IMR-90 (cell line): ENCODE measurements at regions of chrX and their contacts with region 1.

Region 1: GRCh38 chrX:120769576-120770341 is 105.9 kb downstream of the CT47B1 start:
- DNase-seq: peak; percentile 19
- ATAC-seq: no peak
- H3K4me3 ChIP-seq: no peak overlapping the region
- H3K27ac ChIP-seq: no peak overlapping the region
- H3K4me1 ChIP-seq: no peaks in the 10 kb centered on the region
- H3K27me3 ChIP-seq: no peaks in the 10 kb centered on the region
- CTCF ChIP-seq: peak; percentile 31
- POLR2A ChIP-seq: no peak
- RAD21 ChIP-seq: peak; percentile 37

Region 2: GRCh38 chrX:120029354-120029753 is 740.4 kb before region 1 on chrX:
- CTCF ChIA-PET with region 1: no interaction called
- POLR2A ChIA-PET with region 1: no interaction called
- dilution Hi-C with region 1: no loop called
- in situ Hi-C with region 1: no loop called
- intact Hi-C with region 1: no loop called
- DNase-seq: no peak
- ATAC-seq: no peak
- H3K4me3 ChIP-seq: no peak overlapping the region
- H3K27ac ChIP-seq: no peak overlapping the region
- H3K4me1 ChIP-seq: no peaks in the 10 kb centered on the region
- H3K27me3 ChIP-seq: no peaks in the 10 kb centered on the region; the same call in 1 of the 2 replicates
- CTCF ChIP-seq: no peak
- POLR2A ChIP-seq: no peak
- RAD21 ChIP-seq: no peak

Region 3: GRCh38 chrX:120514236-120514635 is 255.5 kb before region 1 on chrX:
- CTCF ChIA-PET with region 1: no interaction called
- POLR2A ChIA-PET with region 1: no interaction called
- dilution Hi-C with region 1: no loop called
- in situ Hi-C with region 1: loop called (anchors 25 kb)
- intact Hi-C with region 1: no loop called
- DNase-seq: peak; percentile 25
- ATAC-seq: peak; percentile 51; the same call in 1 of the 2 replicates
- H3K4me3 ChIP-seq: no peak overlapping the region
- H3K27ac ChIP-seq: no peak overlapping the region
- H3K4me1 ChIP-seq: 0 out of 2 replicates have a peak, but pooled peaks cover 2% of the 10 kb centered on the region
- H3K27me3 ChIP-seq: no peaks in the 10 kb centered on the region
- CTCF ChIP-seq: peak; percentile 29; the same call in 1 of the 2 replicates
- POLR2A ChIP-seq: no peak
- RAD21 ChIP-seq: peak; percentile 39

Region 4: DNA sequence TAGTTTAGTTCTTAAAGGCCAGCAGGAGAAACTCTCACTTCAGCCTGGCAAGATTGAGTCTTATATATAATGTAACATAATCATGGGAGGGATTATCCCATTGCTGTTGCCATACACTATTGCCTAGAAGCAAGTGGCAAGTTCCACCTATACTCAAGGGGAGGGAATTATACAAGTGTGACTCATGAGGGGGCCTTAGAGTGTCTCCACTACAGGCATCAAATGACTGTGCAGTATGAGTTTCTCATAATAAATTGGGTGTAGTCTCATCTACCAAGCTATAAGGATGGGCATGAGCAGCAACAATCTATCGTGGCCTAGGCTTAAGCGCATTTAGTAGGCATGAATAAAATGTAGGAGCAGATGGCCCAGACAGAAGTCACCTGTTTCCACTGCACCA is 50.8 kb before region 1 on chrX:
- CTCF ChIA-PET with region 1: no interaction called
- POLR2A ChIA-PET with region 1: no interaction called
- dilution Hi-C with region 1: no loop called
- in situ Hi-C with region 1: no loop called
- intact Hi-C with region 1: no loop called
- DNase-seq: no peak
- ATAC-seq: no peak
- H3K4me3 ChIP-seq: no peak overlapping the region
- H3K27ac ChIP-seq: no peak overlapping the region
- H3K4me1 ChIP-seq: no peaks in the 10 kb centered on the region
- H3K27me3 ChIP-seq: no peaks in the 10 kb centered on the region
- CTCF ChIP-seq: no peak
- POLR2A ChIP-seq: no peak
- RAD21 ChIP-seq: no peak

Region 5: DNA sequence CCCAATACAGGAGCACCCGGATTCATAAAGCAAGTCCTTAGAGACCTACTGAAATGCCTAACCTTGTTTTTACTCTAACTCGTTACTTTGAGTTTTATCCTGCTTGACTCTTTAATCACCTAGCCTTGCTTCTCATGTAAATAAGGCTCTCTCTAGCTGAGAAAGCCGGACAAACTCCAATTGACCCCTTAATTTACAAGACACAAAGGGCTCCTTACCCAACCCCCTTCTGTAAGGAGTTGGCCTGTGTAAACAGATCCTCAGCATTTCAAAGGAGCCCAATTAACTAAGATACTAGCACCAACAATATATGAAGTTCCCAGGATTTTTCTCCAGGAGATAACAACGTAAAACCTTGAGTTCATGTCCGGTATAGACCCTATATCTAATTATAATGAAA is 44.2 kb after region 1 on chrX:
- CTCF ChIA-PET with region 1: no interaction called
- POLR2A ChIA-PET with region 1: no interaction called
- dilution Hi-C with region 1: no loop called
- in situ Hi-C with region 1: no loop called
- intact Hi-C with region 1: no loop called
- DNase-seq: no peak
- ATAC-seq: no peak
- H3K4me3 ChIP-seq: no peak overlapping the region
- H3K27ac ChIP-seq: no peak overlapping the region
- H3K4me1 ChIP-seq: no peaks in the 10 kb centered on the region
- H3K27me3 ChIP-seq: no peaks in the 10 kb centered on the region
- CTCF ChIP-seq: no peak
- POLR2A ChIP-seq: no peak
- RAD21 ChIP-seq: no peak